PC-3 (cell line): ENCODE measurements at regions of chr20 and their contacts with region 1.

Region 1: DNA sequence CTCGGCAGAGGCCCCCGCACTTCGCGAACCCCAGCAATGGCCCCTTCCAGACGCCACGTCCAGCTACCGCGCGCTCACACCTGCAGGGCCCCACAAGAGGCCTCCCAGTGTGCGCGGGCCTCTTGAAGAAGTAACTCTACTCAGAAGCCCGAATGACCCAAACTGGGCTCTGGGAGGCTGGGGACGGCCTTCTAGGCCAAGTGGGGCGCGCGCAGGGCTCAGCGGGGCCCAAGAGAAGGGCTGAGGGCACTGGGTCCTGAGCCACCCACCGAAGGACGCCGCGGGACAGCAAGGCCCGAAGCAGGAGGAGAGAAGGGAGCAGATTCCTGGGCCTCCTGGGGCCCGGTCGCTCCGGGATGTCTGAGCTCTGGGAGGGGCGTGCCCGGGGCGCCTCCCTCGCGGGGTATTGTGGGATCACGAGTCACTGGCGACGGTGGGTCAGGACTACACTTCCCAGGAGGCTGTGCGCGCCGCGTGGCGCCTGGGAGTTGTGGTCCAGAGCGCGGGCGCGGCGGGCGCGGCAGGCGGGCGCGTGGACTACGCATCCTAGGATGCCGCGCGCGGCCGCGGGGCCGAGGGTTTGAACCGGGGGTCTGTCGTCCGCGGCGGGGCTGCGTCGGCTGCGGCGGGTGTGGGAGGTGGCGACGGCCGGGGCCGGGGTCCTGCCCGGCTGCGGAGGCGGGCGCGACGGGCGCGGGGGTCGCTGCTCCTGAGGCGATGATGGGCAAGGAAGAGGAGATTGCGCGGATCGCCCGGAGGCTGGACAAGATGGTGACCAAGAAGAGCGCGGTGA is at the start of gene TCEA2:
- DNase-seq: peak; percentile 96
- ATAC-seq: peak; percentile 86
- H3K4me3 ChIP-seq: peak within 1 kb of the TSS; percentile 79
- H3K27ac ChIP-seq: peak within 1 kb of the TSS; percentile 73
- H3K4me1 ChIP-seq: peaks cover 46% of the 10 kb centered on the region
- H3K27me3 ChIP-seq: no peaks in the 10 kb centered on the region
- CTCF ChIP-seq: no peak
- total RNA-seq, gene TCEA2: 19.1 and 23.4 TPM in 2 replicates

Region 2: DNA sequence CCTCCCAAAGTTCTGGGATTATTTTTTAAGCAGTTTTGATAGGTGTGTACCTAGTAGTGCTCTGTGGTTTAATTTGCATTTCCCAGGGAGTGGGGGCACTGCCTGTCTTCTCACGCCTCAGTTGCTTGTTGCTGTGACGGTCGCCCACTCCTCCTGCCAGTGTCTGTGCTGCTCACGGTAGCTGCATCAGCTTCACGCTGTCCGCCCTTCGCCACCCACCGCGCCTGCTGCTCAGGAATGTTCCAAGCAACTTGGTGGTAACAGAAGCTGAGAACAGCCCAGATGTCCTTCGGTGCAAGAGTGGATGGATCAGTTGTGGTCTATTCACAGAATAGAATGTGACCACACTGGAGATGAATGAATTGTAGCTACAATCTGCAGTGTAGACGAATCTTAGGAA is 145.0 kb before region 1 on chr20:
- CTCF ChIA-PET with region 1: no interaction called
- POLR2A ChIA-PET with region 1: no interaction called
- intact Hi-C with region 1: no loop called
- DNase-seq: no peak
- ATAC-seq: no peak
- H3K4me3 ChIP-seq: no peak overlapping the region
- H3K27ac ChIP-seq: no peak overlapping the region
- H3K4me1 ChIP-seq: no peaks in the 10 kb centered on the region
- H3K27me3 ChIP-seq: no peaks in the 10 kb centered on the region
- CTCF ChIP-seq: no peak

Region 3: GRCh38 chr20:63980806-63981728 is 81.7 kb before region 1 on chr20 and contains the start of gene PRPF6:
- CTCF ChIA-PET with region 1: no interaction called
- POLR2A ChIA-PET with region 1: interaction called, 6 read pairs
- intact Hi-C with region 1: loop called (anchors 1 kb)
- DNase-seq: peak; percentile 98
- ATAC-seq: peak; percentile 58
- H3K4me3 ChIP-seq: peak within 1 kb of the TSS; percentile 99
- H3K27ac ChIP-seq: peak within 1 kb of the TSS; percentile 67
- H3K4me1 ChIP-seq: peaks cover 28% of the 10 kb centered on the region
- H3K27me3 ChIP-seq: no peaks in the 10 kb centered on the region
- CTCF ChIP-seq: peak; percentile 92
- total RNA-seq, gene PRPF6: 67.1 and 87.2 TPM in 2 replicates

Region 4: GRCh38 chr20:64038565-64039292 is 24.1 kb before region 1 on chr20:
- CTCF ChIA-PET with region 1: interaction called, 8 read pairs
- POLR2A ChIA-PET with region 1: interaction called, 3 read pairs
- intact Hi-C with region 1: loop called (anchors 2 kb)
- DNase-seq: peak; percentile 78
- ATAC-seq: peak; percentile 80
- H3K4me3 ChIP-seq: peak overlapping the region; percentile 71
- H3K27ac ChIP-seq: no peak overlapping the region
- H3K4me1 ChIP-seq: peaks cover 8% of the 10 kb centered on the region
- H3K27me3 ChIP-seq: no peaks in the 10 kb centered on the region
- CTCF ChIP-seq: peak; percentile 71